ENCODE measurements at regions of chr9 and their contacts with region 1.

Region 1: GRCh38 chr9:19048966-19049916 is at the start of gene RRAGA:
- DNase-seq: peak; percentile 97
- ATAC-seq: peak; percentile 89
- H3K4me3 Mint-ChIP-seq: peak within 1 kb of the TSS; percentile 95
- H3K27ac Mint-ChIP-seq: peak within 1 kb of the TSS; percentile 96
- H3K4me1 Mint-ChIP-seq: peaks cover 26% of the 10 kb centered on the region
- H3K27me3 Mint-ChIP-seq: no peaks in the 10 kb centered on the region
- total RNA-seq, gene RRAGA: 42.4 to 53.4 TPM

Region 2: DNA sequence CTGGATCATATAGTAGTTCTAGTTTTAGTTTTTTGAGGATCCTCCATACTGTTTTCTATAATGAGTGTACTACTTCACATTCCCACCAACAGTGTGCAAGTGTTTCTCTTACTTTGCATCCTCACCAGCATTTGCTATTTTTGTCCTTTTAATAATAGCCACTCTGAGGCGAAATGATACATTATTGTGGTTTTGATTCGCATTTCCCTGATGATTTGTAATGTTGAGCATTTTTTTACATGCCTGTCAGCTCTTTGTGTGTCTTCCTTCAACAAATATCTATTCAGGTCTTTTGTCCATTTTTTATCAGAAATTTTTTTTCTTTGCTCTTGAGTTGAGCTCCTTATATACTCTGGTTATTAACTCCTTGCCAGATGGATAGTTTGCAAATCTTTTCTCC is 461.2 kb before region 1 on chr9:
- CTCF ChIA-PET with region 1: no interaction called
- POLR2A ChIA-PET with region 1: no interaction called
- intact Hi-C with region 1: no loop called
- DNase-seq: no peak
- ATAC-seq: no peak
- H3K4me3 Mint-ChIP-seq: no peak overlapping the region
- H3K27ac Mint-ChIP-seq: no peak overlapping the region
- H3K4me1 Mint-ChIP-seq: no peaks in the 10 kb centered on the region
- H3K27me3 Mint-ChIP-seq: no peaks in the 10 kb centered on the region

Region 3: DNA sequence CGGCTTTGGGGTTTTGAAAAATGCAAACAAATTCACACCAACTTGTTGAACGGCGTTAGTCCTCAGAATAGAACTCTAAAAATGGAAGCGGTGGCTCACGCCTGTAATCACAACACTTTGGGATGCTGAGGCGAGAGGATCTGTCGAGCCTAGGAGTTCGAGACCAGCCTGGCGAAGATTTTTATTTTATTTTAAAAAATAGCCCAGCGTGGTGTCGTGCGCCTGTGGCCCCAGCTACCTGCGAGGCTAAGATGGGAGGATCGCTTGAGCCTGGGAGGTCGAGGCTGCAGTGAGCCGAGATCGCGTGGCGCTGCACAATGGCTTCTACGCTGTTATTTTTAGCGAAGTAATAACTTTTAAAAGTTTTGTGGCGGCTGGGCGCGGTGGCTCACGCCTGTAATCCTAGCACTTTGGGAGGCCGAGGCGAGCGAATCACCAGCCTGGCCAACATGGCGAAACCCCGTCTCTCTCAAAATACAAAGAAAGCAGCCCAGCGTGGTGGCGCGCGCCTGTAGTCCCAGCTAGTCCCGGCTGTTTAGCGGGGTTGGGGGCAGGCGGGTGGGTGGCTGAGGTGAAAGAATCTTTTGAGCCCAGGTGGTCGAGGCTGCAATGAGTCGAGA is 78.8 kb after region 1 on chr9:
- CTCF ChIA-PET with region 1: interaction called, 5 read pairs
- POLR2A ChIA-PET with region 1: no interaction called
- intact Hi-C with region 1: loop called (anchors 1 to 2 kb)
- DNase-seq: peak; percentile 54
- ATAC-seq: peak; percentile 14
- H3K4me3 Mint-ChIP-seq: peak overlapping the region; percentile 92
- H3K27ac Mint-ChIP-seq: peak overlapping the region; percentile 88
- H3K4me1 Mint-ChIP-seq: peaks cover 58% of the 10 kb centered on the region
- H3K27me3 Mint-ChIP-seq: no peaks in the 10 kb centered on the region

Region 4: DNA sequence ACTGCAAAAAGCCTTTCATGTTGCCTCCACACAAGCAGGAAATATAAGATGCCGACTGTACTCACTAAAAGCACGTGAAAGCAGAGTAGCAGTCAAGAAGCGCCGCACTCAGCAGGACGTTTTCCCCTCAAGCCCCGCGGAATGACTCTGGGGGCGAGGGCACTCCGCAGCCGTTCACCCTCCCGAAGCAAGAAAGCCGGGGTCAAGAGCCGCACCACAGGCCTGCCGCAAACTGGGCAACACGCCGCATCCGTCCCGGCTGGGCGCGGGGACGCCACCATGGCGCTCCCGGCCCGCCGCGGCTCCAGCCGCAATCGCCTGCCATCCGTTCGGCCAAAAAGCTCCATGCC is 330.4 kb after region 1 on chr9:
- CTCF ChIA-PET with region 1: no interaction called
- POLR2A ChIA-PET with region 1: no interaction called
- intact Hi-C with region 1: loop called (anchors 1 to 2 kb)
- DNase-seq: peak; percentile 54
- ATAC-seq: peak; percentile 16
- H3K4me3 Mint-ChIP-seq: peak overlapping the region; percentile 99
- H3K27ac Mint-ChIP-seq: peak overlapping the region; percentile 100
- H3K4me1 Mint-ChIP-seq: peaks cover 41% of the 10 kb centered on the region
- H3K27me3 Mint-ChIP-seq: no peaks in the 10 kb centered on the region

Region 5: GRCh38 chr9:19456996-19457692 is 407.9 kb after region 1 on chr9:
- CTCF ChIA-PET with region 1: interaction called, 3 read pairs
- POLR2A ChIA-PET with region 1: no interaction called
- intact Hi-C with region 1: loop called in 1 of 2 experiments (anchors 1 kb)
- DNase-seq: peak; percentile 76
- ATAC-seq: peak; percentile 92
- H3K4me3 Mint-ChIP-seq: no peak overlapping the region
- H3K27ac Mint-ChIP-seq: no peak overlapping the region
- H3K4me1 Mint-ChIP-seq: peaks cover 9% of the 10 kb centered on the region
- H3K27me3 Mint-ChIP-seq: no peaks in the 10 kb centered on the region

Region 6: DNA sequence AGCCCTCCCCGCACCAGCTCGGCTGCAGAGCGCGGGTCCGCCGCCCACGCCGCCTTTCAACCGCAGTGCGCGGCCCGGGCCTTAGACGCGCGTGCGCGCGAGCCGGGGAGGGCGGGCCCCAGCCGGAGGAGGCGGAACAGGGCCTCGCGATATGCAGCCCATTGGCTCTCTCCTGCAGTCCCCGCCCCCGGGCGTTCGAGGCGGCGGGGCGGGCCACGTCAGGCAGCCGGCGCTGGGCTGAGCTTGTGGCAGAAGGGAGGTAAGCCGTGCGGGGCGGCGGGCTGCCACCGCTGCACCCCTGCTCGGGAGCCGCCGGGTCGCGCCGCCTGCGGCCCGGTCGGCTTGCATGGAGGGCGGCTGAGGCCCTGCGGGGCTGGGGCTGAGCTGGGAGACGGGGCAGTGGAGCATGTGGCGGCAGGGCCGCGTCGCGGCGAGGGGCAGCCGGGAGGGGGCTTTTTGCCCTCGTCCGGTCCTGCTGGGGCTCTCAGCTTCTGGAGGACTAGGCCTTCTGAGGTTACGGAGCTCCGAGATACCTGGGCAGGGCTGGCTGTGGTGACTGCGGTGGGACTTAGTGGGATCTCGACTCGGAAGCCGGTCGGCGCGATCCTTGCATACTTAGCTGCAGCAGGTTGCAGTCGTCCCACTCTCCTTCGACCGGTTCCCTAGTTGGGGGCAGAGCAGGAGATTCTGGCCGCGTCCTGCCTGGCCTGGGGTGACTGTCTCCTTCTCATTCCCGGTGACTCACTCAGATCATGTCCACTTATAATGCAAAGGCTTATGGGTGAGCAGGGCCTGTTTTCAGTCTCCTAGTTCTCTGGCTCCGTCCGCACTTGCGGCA is 1635.0 kb after region 1 on chr9 and contains the start of gene FOCAD:
- CTCF ChIA-PET with region 1: no interaction called
- POLR2A ChIA-PET with region 1: no interaction called
- intact Hi-C with region 1: loop called in 1 of 2 experiments (anchors 5 kb)
- DNase-seq: peak; percentile 97
- ATAC-seq: peak; percentile 98
- H3K4me3 Mint-ChIP-seq: peak within 1 kb of the TSS; percentile 86
- H3K27ac Mint-ChIP-seq: peak within 1 kb of the TSS; percentile 75
- H3K4me1 Mint-ChIP-seq: peaks cover 27% of the 10 kb centered on the region
- H3K27me3 Mint-ChIP-seq: no peaks in the 10 kb centered on the region
- total RNA-seq, gene FOCAD: 32.5 to 34.3 TPM